Activated naive CD4-positive, alpha-beta T cell treated with anti-CD3 and anti-CD28 coated beads for 36 hours (primary cell): ENCODE measurements at regions of chr13 and their contacts with region 1.

Region 1: DNA sequence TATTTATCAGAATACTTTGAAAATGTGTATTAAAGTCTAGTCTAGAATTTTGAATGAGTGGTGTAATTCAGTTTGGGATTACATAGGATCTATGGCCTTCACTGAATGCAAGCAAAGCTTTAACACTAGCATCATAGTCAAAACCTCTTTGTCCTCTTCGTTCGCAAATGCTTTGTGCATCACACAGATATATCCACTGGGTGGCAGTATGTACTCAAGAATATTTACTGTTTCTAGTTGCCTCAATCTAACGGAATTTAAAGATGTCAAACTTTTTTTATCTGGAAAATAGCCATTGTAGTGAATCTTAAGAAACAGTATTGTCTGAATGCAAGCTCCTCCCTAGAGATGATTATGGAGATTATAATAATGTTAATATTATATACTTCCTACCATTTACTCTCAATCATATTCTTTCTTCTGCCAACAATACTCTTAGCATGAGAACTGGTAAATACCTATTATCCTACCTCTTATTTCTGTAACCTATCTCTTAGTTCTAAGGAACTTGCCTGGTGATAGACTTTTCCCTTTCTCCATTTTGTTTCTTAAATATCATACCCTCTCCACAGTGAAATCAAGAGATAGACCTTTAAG is 25.8 kb downstream of the LACC1 start:
- DNase-seq: peak; percentile 44
- H3K4me3 Mint-ChIP-seq: no peak overlapping the region
- H3K27ac Mint-ChIP-seq: no peak overlapping the region
- H3K4me1 Mint-ChIP-seq: peaks cover 7% of the 10 kb centered on the region
- H3K27me3 Mint-ChIP-seq: peaks cover 16% of the 10 kb centered on the region

Region 2: GRCh38 chr13:43986421-43986981 is 81.0 kb after region 1 on chr13:
- CTCF ChIA-PET with region 1: no interaction called
- intact Hi-C with region 1: no loop called
- DNase-seq: no peak
- H3K4me3 Mint-ChIP-seq: no peak overlapping the region
- H3K27ac Mint-ChIP-seq: no peak overlapping the region
- H3K4me1 Mint-ChIP-seq: no peaks in the 10 kb centered on the region
- H3K27me3 Mint-ChIP-seq: no peaks in the 10 kb centered on the region

Region 3: GRCh38 chr13:44050450-44051063 is 145.0 kb after region 1 on chr13:
- CTCF ChIA-PET with region 1: interaction called, 5 read pairs
- intact Hi-C with region 1: loop called (anchors 2 kb)
- DNase-seq: no peak
- H3K4me3 Mint-ChIP-seq: no peak overlapping the region
- H3K27ac Mint-ChIP-seq: no peak overlapping the region
- H3K4me1 Mint-ChIP-seq: peaks cover 5% of the 10 kb centered on the region
- H3K27me3 Mint-ChIP-seq: peaks cover 25% of the 10 kb centered on the region

Region 4: DNA sequence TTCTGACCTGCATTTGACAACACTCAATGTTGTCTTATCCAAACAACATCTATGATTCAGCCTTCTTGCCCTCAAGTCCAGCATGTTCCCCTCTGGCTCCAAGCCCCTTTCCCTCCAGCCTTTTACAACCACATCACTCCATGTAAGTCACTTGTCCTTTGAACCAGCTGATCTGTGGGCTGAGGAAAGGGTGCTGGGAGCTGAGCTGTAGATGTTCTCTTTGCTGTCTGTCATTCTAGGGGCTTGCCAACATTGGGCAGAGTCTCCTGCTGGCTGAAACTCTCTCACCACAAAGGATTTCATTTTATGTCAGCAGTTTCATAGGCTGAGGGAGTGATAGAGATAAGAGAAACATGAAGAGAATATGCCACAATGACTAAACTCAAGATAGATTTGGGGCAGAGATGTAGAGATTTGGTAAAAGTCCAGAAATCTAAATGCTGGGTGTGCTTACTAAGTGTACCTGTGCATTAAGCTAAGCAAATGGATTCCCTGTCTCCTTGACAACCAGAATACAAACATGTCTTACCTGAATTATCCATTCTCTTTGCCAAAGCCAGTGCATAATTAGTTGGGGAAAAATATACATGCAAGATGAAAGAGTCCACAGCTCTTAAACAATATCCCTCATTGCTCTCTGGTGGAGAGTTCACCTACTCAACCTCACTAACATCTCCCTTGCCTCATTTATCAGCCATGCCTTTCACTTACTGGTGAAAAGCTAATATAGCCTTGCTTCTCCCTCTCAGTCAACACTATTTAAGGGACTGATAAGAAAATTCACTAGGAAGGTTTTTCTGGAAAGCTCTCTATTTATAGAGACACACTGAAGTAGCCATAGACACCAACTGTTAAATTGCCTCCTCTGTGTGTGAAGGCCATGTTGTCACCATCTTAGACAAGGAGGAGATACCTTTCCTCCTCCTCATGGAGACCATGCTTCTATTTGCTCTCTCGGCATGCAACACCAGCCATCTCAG is 292.5 kb after region 1 on chr13:
- CTCF ChIA-PET with region 1: no interaction called
- intact Hi-C with region 1: loop called (anchors 2 kb)
- DNase-seq: peak; percentile 65
- H3K4me3 Mint-ChIP-seq: no peak overlapping the region
- H3K27ac Mint-ChIP-seq: no peak overlapping the region
- H3K4me1 Mint-ChIP-seq: peaks cover 36% of the 10 kb centered on the region
- H3K27me3 Mint-ChIP-seq: peaks cover 6% of the 10 kb centered on the region

Region 5: GRCh38 chr13:44435142-44435982 is 529.8 kb after region 1 on chr13:
- CTCF ChIA-PET with region 1: interaction called, 113 read pairs
- intact Hi-C with region 1: loop called (anchors 1 kb)
- DNase-seq: peak; percentile 96
- H3K4me3 Mint-ChIP-seq: peak overlapping the region; percentile 76
- H3K27ac Mint-ChIP-seq: peak overlapping the region; percentile 24
- H3K4me1 Mint-ChIP-seq: peaks cover 15% of the 10 kb centered on the region
- H3K27me3 Mint-ChIP-seq: peaks cover 9% of the 10 kb centered on the region

Region 6: GRCh38 chr13:44470638-44471562 is 565.4 kb after region 1 on chr13:
- CTCF ChIA-PET with region 1: interaction called, 13 read pairs
- intact Hi-C with region 1: loop called (anchors 1 kb)
- DNase-seq: no peak
- H3K4me3 Mint-ChIP-seq: no peak overlapping the region
- H3K27ac Mint-ChIP-seq: no peak overlapping the region
- H3K4me1 Mint-ChIP-seq: no peaks in the 10 kb centered on the region
- H3K27me3 Mint-ChIP-seq: no peaks in the 10 kb centered on the region

Region 7: GRCh38 chr13:44969551-44970484 is 1064.3 kb after region 1 on chr13:
- CTCF ChIA-PET with region 1: no interaction called
- intact Hi-C with region 1: loop called (anchors 10 kb)
- DNase-seq: no peak
- H3K4me3 Mint-ChIP-seq: no peak overlapping the region
- H3K27ac Mint-ChIP-seq: no peak overlapping the region
- H3K4me1 Mint-ChIP-seq: no peaks in the 10 kb centered on the region
- H3K27me3 Mint-ChIP-seq: no peaks in the 10 kb centered on the region